ENCODE measurements at regions of chr22 and their contacts with region 1.

Region 1: DNA sequence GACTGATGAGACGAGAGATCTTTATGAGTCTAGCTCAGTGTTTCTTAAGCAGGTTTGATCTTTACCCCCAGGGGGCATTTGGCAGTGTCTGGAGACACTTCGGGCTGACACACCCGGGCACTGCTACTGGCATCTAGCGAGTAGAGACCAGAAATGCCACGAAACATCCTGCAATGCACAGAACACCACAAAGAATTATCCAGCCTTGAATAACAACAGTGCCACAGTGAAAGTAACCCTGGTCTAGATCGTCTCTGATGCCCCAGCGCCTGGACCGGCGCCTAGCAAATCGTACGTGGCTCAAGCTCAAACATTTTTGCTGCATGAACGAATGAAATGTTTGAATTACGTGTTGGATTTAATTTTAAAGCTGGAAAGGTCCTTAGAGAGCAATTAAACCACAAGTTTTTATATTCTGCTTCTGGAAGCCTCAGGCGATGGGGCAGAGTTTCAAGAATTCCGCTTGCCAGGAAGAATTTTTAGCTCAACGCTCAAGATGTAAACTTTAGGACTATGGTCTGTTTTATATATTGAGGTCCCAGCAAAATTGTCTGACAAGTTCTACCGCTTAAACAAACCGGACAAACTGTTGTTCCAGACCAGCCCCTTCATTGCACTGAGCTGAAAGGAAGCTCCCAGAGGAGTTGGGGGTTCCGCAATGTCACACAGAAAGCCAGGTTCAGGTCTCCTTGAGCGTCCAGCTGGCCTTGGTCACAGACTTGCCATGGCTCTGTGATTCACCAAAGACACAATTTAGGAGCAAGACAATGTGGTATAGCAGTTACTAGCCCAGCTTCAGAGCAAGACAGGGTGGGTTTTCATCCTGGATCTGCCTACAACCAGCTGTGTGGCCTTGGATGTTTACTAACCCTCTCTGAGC is 44.2 kb upstream of the SMTN start:
- DNase-seq: peak; percentile 82

Region 2: DNA sequence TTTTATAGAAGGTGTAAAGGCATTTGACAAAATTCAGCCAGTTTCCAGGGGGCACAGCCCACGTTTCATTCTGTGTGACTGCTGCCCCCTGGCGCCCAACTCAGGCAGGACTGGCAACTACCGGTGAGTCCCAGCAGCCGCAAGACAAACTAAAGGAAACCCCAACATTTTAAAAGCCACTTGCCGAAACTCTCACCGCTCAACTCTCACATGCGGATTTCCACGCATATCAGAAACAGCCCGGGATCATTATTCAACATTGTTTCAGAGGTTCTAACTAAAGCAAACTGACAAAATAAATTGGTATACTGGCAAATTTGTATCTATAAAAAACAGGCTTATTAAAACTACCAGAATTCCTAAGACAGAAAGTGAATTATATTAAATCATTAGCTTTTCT is 116.5 kb before region 1 on chr22:
- intact Hi-C with region 1: no loop called
- DNase-seq: peak; percentile 92

Region 3: DNA sequence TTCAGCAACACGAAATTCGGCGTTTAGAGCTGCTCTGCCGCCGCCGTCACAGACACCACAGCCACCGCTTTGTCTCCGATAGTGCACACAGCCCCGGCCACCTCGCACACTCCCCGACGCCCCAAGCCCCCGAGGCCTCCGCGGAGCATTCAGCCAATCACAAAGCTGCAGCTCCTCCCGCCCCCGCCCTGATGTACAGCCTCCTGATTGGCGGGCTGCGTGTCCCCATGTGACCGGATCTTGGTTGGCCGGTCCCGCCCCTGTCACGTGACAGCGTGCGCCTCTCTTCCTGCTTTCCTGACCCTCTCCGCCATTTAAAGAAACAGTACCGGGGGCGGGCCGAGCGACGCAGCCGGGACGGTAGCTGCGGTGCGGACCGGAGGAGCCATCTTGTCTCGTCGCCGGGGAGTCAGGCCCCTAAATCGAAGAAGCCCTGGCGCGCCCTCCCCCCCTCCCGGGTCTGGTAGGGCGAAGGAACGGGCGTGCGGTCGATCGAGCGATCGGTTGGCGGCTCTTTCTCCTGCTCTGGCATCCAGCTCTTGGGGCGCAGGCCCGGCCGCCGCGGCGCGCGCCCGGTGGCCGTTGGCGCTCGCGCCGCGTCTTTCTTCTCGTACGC is 67.9 kb before region 1 on chr22 and contains the start of gene TUG1:
- intact Hi-C with region 1: loop called in 1 of 2 experiments (anchors 10 kb)
- DNase-seq: peak; percentile 99
- total RNA-seq, gene TUG1: 61.7 to 65.8 TPM

Region 4: DNA sequence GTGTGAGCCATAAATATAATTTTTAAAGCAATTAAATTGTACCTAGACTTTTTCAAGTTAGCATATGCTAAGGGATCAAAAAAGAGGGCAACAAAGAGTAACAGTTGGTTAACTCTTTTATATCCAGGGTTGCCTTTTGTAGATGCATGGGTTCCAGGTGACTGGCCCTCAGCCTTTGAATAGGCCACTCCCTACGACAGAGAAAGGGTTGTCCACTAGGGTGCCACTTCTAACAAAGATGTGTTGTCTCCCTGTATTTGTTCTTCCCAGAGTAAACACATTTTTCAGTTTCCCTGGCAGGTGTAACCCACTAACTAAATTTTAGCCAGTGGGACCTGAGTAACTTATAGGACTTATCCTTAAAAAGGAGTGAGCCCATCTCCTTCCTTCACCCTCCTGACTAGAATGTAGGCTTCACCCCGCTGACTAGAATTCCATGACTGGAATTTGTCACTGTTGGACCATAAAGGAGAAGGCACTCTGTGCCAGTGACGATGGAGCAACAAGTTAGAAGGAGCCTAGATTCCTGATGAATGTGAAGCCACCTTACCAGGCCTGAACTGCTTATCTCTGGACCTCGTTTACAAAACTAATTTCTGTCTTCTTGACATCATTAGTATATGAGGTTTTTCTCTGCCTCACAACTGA is 51.2 kb before region 1 on chr22:
- intact Hi-C with region 1: no loop called
- DNase-seq: no peak

Region 5: GRCh38 chr22:31363885-31364465 is 327.1 kb after region 1 on chr22:
- intact Hi-C with region 1: no loop called
- DNase-seq: no peak

Measured in posterior vena cava (tissue), 2 donors.